ENCODE measurements at regions of chr1 and their contacts with region 1.

Region 1: DNA sequence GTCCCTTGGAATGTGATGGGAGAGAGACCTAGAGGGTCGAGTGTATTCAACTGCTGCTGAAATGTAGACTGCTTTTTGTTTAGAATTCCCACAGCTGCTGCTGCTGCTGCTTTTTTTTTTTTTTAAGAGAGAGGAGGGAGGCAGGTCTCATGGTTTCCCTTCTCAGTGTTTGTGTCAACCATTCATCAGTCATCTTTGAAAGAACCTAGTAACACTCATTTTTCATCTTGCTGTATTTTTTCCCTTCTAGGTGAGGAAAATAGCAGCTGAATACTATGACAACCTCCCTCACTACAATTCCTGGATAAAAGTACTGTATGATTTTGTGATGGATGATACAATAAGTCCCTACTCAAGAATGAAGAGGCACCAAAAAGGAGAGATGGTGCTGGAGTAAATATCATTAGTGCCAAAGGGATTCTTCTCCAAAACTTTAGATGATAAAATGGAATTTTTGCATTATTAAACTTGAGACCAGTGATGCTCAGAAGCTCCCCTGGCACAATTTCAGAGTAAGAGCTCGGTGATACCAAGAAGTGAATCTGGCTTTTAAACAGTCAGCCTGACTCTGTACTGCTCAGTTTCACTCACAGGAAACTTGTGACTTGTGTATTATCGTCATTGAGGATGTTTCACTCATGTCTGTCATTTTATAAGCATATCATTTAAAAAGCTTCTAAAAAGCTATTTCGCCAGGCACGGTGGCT is 9.2 kb downstream of the DEGS1 start:
- DNase-seq: no peak
- ATAC-seq: no peak
- H3K4me3 ChIP-seq: no peak overlapping the region
- H3K4me3 Mint-ChIP-seq: no peak overlapping the region
- H3K27ac ChIP-seq: no peak overlapping the region
- H3K27ac Mint-ChIP-seq: peak overlapping the region; percentile 28 to 46
- H3K4me1 ChIP-seq: peaks cover 0 to 2% of the 10 kb centered on the region in 2 experiments
- H3K4me1 Mint-ChIP-seq: peaks cover 7 to 37% (median 24%) of the 10 kb centered on the region in 3 donors
- H3K27me3 ChIP-seq: no peaks in the 10 kb centered on the region
- H3K27me3 Mint-ChIP-seq: no peaks in the 10 kb centered on the region

Region 2: DNA sequence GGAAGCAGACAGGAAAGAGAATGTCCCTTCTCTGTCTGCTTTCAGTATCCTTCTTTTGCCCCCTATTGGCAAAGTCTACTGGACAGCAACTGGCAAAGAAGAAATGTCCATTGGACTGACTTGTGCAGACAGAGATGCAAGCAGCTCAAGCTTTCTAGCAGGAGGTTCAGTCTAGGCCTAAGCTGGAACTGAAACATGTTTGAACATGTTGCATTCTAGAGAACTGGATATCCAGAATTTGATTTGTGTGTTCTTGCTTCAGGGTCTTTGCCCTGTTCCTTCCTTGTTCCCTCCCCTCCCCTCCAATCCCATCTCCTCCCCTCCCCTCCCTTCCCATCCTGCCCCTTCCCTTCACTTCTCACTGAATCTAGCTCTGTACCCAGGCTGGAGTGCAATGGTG is 1386.4 kb before region 1 on chr1:
- CTCF ChIA-PET with region 1: no interaction called
- POLR2A ChIA-PET with region 1: interaction called in 1 of 2 experiments, 10 read pairs
- DNase-seq: no peak
- ATAC-seq: no peak
- H3K4me3 ChIP-seq: no peak overlapping the region
- H3K4me3 Mint-ChIP-seq: no peak overlapping the region
- H3K27ac ChIP-seq: no peak overlapping the region
- H3K27ac Mint-ChIP-seq: no peak overlapping the region
- H3K4me1 ChIP-seq: no peaks in the 10 kb centered on the region
- H3K4me1 Mint-ChIP-seq: no peaks in the 10 kb centered on the region
- H3K27me3 ChIP-seq: peaks cover 0 to 4% of the 10 kb centered on the region in 2 experiments
- H3K27me3 Mint-ChIP-seq: peaks cover 8 to 19% of the 10 kb centered on the region in 2 donors

Region 3: GRCh38 chr1:223531742-223532341 is 660.4 kb before region 1 on chr1:
- CTCF ChIA-PET with region 1: no interaction called
- POLR2A ChIA-PET with region 1: no interaction called
- DNase-seq: peak in 21 of 35 experiments; percentile 6 to 49 (median 21)
- ATAC-seq: no peak
- H3K4me3 ChIP-seq: no peak overlapping the region
- H3K4me3 Mint-ChIP-seq: no peak overlapping the region
- H3K27ac ChIP-seq: no peak overlapping the region
- H3K27ac Mint-ChIP-seq: no peak overlapping the region
- H3K4me1 ChIP-seq: peaks cover 1% of the 10 kb centered on the region in 2 experiments
- H3K4me1 Mint-ChIP-seq: peaks cover 0 to 10% (median 3%) of the 10 kb centered on the region in 3 donors
- H3K27me3 ChIP-seq: no peaks in the 10 kb centered on the region
- H3K27me3 Mint-ChIP-seq: peaks cover 0 to 2% of the 10 kb centered on the region in 2 donors

Region 4: DNA sequence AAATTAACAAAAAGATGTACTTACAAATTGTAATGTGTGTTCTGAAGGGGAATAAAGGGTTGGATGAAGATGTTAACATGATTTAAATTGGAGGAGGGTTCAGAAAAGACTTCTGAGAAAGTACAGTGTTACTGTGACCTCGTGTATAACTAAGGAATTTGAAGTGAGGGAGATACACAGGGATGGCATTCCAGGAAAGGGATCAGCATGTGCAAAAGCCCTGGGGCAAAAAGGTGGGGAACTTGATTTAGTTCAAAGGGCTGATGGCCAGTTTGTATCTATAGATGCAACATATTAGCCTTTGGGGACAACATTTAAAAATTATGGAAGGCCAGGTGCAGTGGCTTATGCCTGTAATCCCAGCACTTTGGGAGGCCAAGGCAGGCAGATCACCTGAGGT is 42.5 kb before region 1 on chr1:
- CTCF ChIA-PET with region 1: no interaction called
- POLR2A ChIA-PET with region 1: no interaction called
- DNase-seq: no peak
- ATAC-seq: no peak
- H3K4me3 ChIP-seq: no peak overlapping the region
- H3K4me3 Mint-ChIP-seq: no peak overlapping the region
- H3K27ac ChIP-seq: no peak overlapping the region
- H3K27ac Mint-ChIP-seq: peak overlapping the region in 1 of 2 donors; percentile 2
- H3K4me1 ChIP-seq: peaks cover 0 to 2% of the 10 kb centered on the region in 2 experiments
- H3K4me1 Mint-ChIP-seq: peaks cover 14 to 16% (median 14%) of the 10 kb centered on the region in 3 donors
- H3K27me3 ChIP-seq: no peaks in the 10 kb centered on the region
- H3K27me3 Mint-ChIP-seq: no peaks in the 10 kb centered on the region

Measured in T-cell (primary cell).